ENCODE measurements at regions of chr19 and their contacts with region 1.

Region 1: DNA sequence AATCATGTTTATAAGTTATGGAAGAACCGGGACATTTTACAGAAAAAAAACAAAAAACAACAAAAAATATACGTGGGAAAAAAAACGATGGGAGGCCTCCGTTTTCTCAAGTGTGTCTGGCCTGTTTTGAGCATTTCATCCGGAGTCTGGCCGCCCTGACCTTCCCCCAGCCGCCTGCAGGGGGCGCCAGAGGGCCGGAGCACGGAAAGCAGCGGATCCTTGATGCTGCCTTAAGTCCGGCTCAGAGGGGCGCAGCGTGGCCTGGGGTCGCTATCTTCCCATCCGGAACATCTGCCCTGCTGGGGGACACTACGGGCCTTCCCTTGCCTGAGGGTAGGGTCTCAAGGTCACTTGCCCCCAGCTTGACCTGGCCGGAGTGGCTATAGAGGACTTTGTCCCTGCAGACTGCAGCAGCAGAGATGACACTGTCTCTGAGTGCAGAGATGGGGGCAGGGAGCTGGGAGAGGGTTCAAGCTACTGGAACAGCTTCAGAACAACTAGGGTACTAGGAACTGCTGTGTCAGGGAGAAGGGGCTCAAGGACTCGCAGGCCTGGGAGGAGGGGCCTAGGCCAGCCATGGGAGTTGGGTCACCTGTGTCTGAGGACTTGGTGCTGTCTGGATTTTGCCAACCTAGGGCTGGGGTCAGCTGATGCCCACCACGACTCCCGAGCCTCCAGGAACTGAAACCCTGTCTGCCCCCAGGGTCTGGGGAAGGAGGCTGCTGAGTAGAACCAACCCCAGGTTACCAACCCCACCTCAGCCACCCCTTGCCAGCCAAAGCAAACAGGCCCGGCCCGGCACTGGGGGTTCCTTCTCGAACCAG is 1.8 kb upstream of the APOE start:
- DNase-seq: peak; percentile 75 to 84
- ATAC-seq: peak; percentile 63 to 88 (median 80)
- H3K4me3 ChIP-seq: no peak overlapping the region
- H3K27ac ChIP-seq: no peak overlapping the region
- H3K4me1 ChIP-seq: no peaks in the 10 kb centered on the region
- H3K27me3 ChIP-seq: peaks cover 0 to 29% (median 16%) of the 10 kb centered on the region in 3 donors
- CTCF ChIP-seq: peak; percentile 99

Region 2: GRCh38 chr19:45059278-45059965 is 155.6 kb after region 1 on chr19:
- intact Hi-C with region 1: loop called (anchors 5 to 10 kb)
- DNase-seq: peak; percentile 70 to 80
- ATAC-seq: peak; percentile 62 to 83 (median 72)
- H3K4me3 ChIP-seq: no peak overlapping the region
- H3K27ac ChIP-seq: no peak overlapping the region
- H3K4me1 ChIP-seq: no peaks in the 10 kb centered on the region
- H3K27me3 ChIP-seq: no peaks in the 10 kb centered on the region
- CTCF ChIP-seq: peak; percentile 87

Measured in psoas muscle (tissue), 8 donors.